ENCODE measurements at regions of chr9 and their contacts with region 1.

Region 1: DNA sequence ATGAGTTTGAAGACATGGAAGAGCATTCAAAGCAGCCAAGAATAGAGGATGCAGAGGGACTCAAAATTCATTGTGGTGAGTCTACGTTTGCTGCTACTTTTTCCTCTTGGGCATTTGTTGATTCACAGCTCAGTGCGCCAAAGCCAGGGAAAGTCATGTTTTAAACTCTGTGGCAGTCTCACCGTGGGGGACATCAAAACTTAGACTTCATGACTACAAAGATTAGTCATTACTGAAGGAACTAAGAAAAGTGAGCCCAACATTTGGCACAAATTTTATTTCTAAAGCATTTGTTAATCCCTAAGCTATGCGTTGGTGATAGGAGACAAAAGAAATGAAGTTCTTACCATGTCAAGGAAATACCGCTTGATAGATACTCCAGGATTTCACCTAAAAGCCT is 73.7 kb upstream of the MTAP start:
- DNase-seq: no peak

Region 2: DNA sequence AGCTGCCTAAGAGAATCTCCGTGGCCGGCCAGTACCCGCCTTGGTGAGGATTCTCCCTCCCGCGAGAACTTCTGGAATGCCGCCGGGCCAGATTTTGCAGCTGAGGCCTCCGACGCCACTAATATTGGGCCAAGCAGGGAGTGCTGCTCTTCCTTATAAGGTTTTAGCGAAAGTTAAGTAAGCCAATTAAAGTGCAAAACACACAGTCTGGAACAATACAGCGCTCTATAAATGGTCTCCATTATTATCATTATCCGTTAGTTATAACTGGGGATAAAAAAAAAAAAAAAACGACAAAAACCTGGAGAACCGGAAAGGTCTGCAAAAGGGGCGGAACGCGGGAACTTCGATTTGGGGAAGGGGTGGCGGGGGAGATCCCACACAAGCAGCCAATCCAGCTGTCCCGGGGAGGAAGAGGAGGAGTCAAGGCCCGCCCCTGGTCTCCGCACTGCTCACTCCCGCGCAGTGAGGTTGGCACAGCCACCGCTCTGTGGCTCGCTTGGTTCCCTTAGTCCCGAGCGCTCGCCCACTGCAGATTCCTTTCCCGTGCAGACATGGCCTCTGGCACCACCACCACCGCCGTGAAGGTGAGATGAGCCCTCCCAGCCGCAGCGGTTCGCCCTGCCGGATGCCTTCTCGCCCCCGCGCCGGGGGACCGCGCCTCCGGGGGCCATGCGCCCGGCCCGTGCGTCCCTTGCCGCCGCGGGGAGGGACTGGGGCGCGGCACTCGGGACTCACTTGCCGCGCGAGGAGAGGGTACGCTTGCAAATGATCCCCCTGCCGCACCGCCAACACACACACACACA is 73.6 kb after region 1 on chr9 and contains the start of gene MTAP:
- intact Hi-C with region 1: no loop called
- DNase-seq: peak; percentile 96
- total RNA-seq, gene MTAP: 28.1 to 33.0 TPM

Region 3: GRCh38 chr9:22158927-22159346 is 430.2 kb after region 1 on chr9:
- intact Hi-C with region 1: loop called in 1 of 2 experiments (anchors 5 kb)
- DNase-seq: no peak

Measured in posterior vena cava (tissue), 2 donors.